ENCODE measurements at regions of chr13 and their contacts with region 1.

Region 1: DNA sequence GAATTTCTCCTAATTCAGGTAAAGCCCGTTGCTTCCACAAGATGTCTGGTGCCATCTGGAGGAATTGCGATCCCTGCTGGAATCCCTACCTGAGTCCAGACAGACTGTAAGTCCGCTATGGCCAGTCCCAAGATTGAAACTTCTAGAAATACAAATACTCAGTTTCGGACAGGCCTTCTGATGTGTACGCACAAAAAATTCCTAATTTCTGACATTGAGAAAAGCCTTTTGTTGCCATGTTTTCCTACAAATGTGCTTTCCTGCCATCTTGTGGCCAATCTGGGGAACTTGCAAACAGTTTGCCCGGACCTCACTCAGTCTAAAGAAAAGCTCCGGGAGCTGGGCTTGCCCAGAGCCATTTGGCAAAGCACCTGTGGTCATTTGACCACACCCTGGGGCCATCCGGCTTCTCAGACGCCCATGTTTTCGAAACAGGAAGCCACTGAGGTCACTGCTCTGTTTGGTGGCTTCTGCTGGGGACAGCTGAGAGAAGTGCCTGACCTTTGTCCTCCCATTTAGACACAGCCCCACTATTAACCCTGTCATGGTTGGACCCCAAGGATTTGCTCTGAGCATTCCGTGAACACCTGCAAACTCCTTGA is 79.4 kb downstream of the SLC15A1 start:
- DNase-seq: peak; percentile 36 to 53 (median 46)
- H3K4me3 ChIP-seq: no peak overlapping the region
- H3K4me3 Mint-ChIP-seq: no peak overlapping the region
- H3K27ac ChIP-seq: no peak overlapping the region
- H3K27ac Mint-ChIP-seq: no peak overlapping the region
- H3K4me1 ChIP-seq: peaks cover 7% of the 10 kb centered on the region
- H3K4me1 Mint-ChIP-seq: peaks cover 0 to 1% (median 0%) of the 10 kb centered on the region in 4 donors
- H3K27me3 ChIP-seq: no peaks in the 10 kb centered on the region
- H3K27me3 Mint-ChIP-seq: peaks cover 2 to 4% of the 10 kb centered on the region in 2 donors

Region 2: GRCh38 chr13:97921176-97921816 is 751.7 kb before region 1 on chr13:
- CTCF ChIA-PET with region 1: no interaction called
- POLR2A ChIA-PET with region 1: no interaction called
- intact Hi-C with region 1: no loop called
- DNase-seq: no peak
- H3K4me3 ChIP-seq: no peak overlapping the region
- H3K4me3 Mint-ChIP-seq: no peak overlapping the region
- H3K27ac ChIP-seq: no peak overlapping the region
- H3K27ac Mint-ChIP-seq: no peak overlapping the region
- H3K4me1 ChIP-seq: no peaks in the 10 kb centered on the region
- H3K4me1 Mint-ChIP-seq: no peaks in the 10 kb centered on the region
- H3K27me3 ChIP-seq: no peaks in the 10 kb centered on the region
- H3K27me3 Mint-ChIP-seq: no peaks in the 10 kb centered on the region

Region 3: DNA sequence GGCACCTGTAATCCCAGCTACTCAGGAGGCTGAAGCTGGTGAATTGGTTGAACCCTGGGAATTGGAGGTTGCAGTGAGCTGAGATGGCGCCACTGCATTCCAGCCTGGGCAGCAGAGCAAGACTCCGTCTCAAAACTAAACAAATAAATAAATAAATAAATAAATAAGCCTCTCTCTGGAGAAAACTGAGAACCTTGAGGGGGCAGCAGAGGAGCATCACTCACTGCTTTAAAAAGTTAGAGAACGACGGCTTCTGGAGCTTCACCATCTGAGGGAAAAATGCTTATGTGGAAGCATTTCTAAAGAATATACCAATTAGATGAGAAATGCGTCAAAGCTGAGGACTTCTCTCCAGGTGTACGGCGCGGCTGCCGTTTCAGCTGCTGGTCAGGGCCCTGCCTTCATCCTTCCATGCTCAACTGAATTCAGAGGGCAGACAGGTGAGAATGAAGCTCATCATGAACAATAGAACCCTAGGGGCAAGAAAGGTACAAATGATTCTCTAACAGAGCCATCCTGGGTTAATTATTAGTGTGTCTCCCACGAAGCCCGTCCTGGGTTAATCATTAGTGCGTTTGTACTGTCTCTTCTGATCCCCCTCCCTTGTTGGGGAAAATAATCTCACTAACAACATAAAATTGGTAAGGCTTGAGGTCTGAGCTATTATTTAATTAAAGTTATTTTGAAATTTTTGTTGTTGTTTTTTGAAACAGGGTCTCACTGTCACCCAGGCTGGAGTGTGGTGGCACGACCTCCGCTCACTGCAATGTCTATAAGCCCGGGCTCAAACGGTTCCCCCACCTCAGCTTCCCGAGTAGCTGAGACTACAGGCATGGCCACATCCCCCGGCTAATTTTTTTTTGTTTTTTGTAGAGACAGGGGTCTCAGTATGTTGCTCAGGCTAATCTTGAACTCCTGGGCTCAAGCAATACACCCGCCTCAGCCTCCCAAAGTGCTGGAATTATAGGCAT is 639.5 kb before region 1 on chr13:
- CTCF ChIA-PET with region 1: no interaction called
- POLR2A ChIA-PET with region 1: no interaction called
- intact Hi-C with region 1: loop called (anchors 10 kb)
- DNase-seq: no peak
- H3K4me3 ChIP-seq: no peak overlapping the region
- H3K4me3 Mint-ChIP-seq: no peak overlapping the region
- H3K27ac ChIP-seq: no peak overlapping the region
- H3K27ac Mint-ChIP-seq: no peak overlapping the region
- H3K4me1 ChIP-seq: no peaks in the 10 kb centered on the region
- H3K4me1 Mint-ChIP-seq: peaks cover 0 to 3% (median 1%) of the 10 kb centered on the region in 4 donors
- H3K27me3 ChIP-seq: no peaks in the 10 kb centered on the region
- H3K27me3 Mint-ChIP-seq: peaks cover 0 to 3% of the 10 kb centered on the region in 2 donors

Region 4: DNA sequence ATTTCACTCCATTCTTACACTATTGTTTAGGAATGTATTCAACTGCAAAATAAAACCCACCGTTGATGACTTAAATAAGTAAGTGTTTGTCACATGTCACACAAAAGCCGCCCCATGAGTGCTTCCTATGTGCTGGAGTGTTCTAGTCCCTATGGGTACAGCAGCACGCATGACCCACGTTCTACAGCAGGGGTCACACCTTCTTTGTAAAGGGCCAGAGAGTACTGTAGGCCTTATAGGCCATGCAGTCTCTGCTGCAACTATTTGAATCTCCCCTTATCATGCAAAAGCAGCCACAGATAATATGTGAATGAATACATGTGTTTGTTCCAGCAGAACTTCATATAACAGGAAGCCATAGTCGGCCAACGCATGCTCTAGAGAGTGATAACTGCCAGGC is 327.5 kb before region 1 on chr13:
- CTCF ChIA-PET with region 1: interaction called, 3 read pairs
- POLR2A ChIA-PET with region 1: no interaction called
- intact Hi-C with region 1: loop called (anchors 1 kb)
- DNase-seq: no peak
- H3K4me3 ChIP-seq: no peak overlapping the region
- H3K4me3 Mint-ChIP-seq: no peak overlapping the region
- H3K27ac ChIP-seq: no peak overlapping the region
- H3K27ac Mint-ChIP-seq: no peak overlapping the region
- H3K4me1 ChIP-seq: no peaks in the 10 kb centered on the region
- H3K4me1 Mint-ChIP-seq: no peaks in the 10 kb centered on the region
- H3K27me3 ChIP-seq: no peaks in the 10 kb centered on the region
- H3K27me3 Mint-ChIP-seq: peaks cover 5 to 8% of the 10 kb centered on the region in 2 donors

Region 5: GRCh38 chr13:98853771-98854221 is 180.8 kb after region 1 on chr13:
- CTCF ChIA-PET with region 1: no interaction called
- POLR2A ChIA-PET with region 1: no interaction called
- intact Hi-C with region 1: no loop called
- DNase-seq: no peak
- H3K4me3 ChIP-seq: no peak overlapping the region
- H3K4me3 Mint-ChIP-seq: no peak overlapping the region
- H3K27ac ChIP-seq: no peak overlapping the region
- H3K27ac Mint-ChIP-seq: peak overlapping the region in 2 of 7 donors; percentile 15 to 23
- H3K4me1 ChIP-seq: no peaks in the 10 kb centered on the region
- H3K4me1 Mint-ChIP-seq: no peaks in the 10 kb centered on the region
- H3K27me3 ChIP-seq: no peaks in the 10 kb centered on the region
- H3K27me3 Mint-ChIP-seq: no peaks in the 10 kb centered on the region

Measured in CD4-positive, alpha-beta memory T cell (primary cell).